Activated CD4-positive, alpha-beta T cell treated with anti-CD3 and anti-CD28 coated beads for 36 hours (primary cell): ENCODE measurements at regions of chr20 and their contacts with region 1.

Region 1: DNA sequence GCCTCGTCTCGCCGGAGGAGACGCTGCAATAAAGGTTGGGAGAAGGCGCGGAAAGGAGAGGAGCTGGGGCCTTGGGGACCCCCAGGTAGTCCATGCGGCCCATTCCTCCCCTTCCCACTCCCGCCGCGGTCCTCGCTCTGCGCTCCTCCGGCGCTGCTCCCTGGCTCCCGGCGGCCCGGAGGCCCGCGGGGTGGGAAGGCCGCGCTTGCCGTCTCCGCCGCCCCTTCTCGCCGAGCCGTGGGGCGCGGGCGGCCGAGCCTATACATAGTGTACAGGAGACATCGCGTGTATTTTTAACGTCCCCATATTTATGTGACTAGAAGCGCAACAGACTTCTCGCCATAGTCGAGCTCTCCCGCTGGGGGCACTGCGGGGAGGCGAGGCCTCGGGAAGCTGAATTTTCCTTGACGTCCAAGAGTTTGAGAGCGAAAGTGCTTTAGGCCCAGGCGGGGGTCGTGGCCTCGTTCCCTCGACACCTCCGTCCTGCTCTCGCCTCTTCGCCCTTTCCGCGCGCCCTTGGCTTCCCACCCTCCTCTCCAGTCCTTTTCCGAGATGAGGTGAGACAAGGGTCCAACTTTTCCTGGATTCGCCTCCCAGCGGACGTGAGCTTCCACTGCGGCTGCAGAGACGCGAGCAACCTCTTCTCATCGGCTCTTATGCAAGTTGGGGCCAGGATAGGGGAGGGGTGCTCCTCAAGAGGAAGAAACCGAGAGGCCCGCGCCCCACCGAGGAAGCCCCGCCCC is 29.0 kb downstream of the SLC12A5 start:
- DNase-seq: peak; percentile 52
- ATAC-seq: peak; percentile 42
- H3K4me3 Mint-ChIP-seq: no peak overlapping the region
- H3K27ac Mint-ChIP-seq: no peak overlapping the region
- H3K4me1 Mint-ChIP-seq: peaks cover 42% of the 10 kb centered on the region
- H3K27me3 Mint-ChIP-seq: peaks cover 19% of the 10 kb centered on the region

Region 2: GRCh38 chr20:46031701-46032254 is 26.2 kb before region 1 on chr20:
- CTCF ChIA-PET with region 1: no interaction called
- POLR2A ChIA-PET with region 1: no interaction called
- intact Hi-C with region 1: loop called in 1 of 2 experiments (anchors 2 kb)
- DNase-seq: peak; percentile 24
- ATAC-seq: no peak
- H3K4me3 Mint-ChIP-seq: no peak overlapping the region
- H3K27ac Mint-ChIP-seq: no peak overlapping the region
- H3K4me1 Mint-ChIP-seq: no peaks in the 10 kb centered on the region
- H3K27me3 Mint-ChIP-seq: peaks cover 49% of the 10 kb centered on the region